ENCODE measurements at regions of chr11 and their contacts with region 1.

Region 1: DNA sequence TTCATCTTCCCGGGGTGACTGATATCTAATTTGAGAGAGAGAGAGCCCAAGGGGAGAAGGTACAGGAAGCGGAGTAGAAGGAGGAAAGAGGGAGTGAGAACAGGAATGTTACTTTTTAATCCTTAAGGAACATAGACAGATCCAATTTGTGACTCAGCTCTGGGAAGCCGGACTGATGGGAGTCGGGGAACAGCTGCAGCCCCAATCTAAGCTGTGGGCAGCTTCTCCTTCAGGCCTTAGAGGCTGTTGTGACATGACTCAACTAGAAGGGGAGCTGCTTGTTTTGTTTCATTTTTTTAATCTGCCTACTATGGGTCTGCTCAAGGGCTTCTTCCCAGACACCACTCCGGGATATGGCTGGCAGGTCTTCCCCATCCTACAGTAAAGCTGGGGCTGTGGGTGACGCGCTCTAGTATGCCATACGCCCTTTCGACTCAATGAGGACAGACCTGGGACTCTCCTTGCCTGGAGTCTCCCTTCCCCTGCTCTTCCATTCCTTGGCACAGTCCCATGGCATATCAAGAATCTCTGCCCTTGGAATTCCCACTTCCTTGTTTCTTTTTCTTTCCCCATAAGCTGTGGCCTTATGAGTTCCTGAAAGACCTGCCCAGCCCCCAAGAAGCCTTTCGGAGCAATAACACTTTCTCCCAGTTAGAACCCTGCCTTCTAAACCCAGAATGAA is 103.3 kb upstream of the AKIP1 start:
- DNase-seq: peak; percentile 51
- ATAC-seq: peak; percentile 30

Region 2: DNA sequence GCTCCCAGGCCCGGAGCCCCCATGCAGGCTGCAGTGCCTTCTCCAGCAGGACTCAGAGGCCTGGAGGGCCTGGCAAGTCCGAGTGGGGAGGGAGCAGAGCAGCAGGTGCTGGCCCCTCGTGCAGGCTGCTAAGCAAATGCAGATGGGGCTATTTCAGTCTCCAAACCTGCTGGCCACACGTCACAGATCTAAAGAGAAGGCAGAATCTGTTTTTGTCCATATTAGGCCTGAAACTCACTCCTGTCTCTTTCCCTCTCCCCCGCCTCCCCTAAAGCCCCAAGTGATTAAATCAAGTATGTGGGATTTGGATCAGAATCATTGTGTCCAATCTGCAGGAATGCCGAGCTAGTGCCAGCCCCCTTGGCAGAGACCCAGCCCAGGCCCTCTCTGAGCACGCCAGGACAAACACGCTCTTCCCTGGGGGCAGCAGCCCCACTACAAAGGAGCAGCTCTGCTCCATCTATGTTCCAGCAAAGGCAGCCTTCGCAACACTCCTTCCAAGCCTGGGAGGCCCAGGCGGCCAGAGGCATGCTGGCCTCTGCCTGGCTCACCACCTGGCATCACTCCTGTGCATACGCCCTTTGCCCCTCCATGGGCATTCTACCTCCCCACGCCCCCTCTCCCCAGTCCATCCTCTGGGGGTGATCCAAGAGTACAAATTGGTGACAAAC is 98.5 kb before region 1 on chr11:
- intact Hi-C with region 1: loop called (anchors 5 kb)
- DNase-seq: peak; percentile 94
- ATAC-seq: peak; percentile 72

Measured in Right ventricle myocardium superior (tissue), 1 donor.